Activated naive CD4-positive, alpha-beta T cell treated with anti-CD3 and anti-CD28 coated beads for 36 hours (primary cell): ENCODE measurements at regions of chr2 and their contacts with region 1.

Region 1: DNA sequence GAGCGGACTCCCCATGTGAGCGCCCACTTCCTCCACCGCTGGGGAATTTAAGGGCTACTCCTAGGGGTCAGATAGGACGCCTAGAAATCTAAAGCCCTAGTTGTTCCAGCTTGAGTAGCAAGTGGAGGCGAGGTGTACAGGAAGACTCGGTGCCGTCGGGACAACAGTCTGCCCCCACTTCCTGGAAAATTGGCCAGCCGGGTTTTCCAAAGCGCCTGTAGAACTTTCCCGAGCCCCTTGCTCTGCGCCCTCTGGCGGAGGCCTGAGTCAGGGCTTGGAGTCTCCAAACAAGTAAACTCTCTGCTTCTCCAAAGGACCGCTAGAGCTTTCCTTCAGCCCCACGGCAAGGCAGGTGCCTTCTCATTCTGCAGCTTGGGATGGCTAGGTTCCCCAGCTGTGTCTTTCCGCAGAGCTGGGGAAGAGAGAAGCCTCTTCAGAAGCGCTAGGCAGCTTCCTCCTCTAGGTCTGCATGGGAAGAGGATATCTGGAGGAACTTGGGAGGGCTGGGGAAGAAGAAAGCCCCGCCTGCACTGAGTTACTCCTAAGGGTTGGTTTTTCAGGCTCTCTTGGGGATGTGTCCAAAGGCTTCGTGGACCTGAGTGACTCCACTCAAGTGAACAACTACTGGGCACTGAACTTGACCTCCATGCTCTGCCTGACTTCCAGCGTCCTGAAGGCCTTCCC is 688 bp downstream of the SPR start:
- DNase-seq: peak; percentile 76
- H3K4me3 Mint-ChIP-seq: peak overlapping the region; percentile 76
- H3K27ac Mint-ChIP-seq: no peak overlapping the region
- H3K4me1 Mint-ChIP-seq: peaks cover 6% of the 10 kb centered on the region
- H3K27me3 Mint-ChIP-seq: peaks cover 63% of the 10 kb centered on the region

Region 2: GRCh38 chr2:72770879-72771461 is 116.9 kb before region 1 on chr2:
- CTCF ChIA-PET with region 1: interaction called, 13 read pairs
- intact Hi-C with region 1: loop called (anchors 1 kb)
- DNase-seq: peak; percentile 78
- H3K4me3 Mint-ChIP-seq: no peak overlapping the region
- H3K27ac Mint-ChIP-seq: no peak overlapping the region
- H3K4me1 Mint-ChIP-seq: no peaks in the 10 kb centered on the region
- H3K27me3 Mint-ChIP-seq: no peaks in the 10 kb centered on the region

Region 3: DNA sequence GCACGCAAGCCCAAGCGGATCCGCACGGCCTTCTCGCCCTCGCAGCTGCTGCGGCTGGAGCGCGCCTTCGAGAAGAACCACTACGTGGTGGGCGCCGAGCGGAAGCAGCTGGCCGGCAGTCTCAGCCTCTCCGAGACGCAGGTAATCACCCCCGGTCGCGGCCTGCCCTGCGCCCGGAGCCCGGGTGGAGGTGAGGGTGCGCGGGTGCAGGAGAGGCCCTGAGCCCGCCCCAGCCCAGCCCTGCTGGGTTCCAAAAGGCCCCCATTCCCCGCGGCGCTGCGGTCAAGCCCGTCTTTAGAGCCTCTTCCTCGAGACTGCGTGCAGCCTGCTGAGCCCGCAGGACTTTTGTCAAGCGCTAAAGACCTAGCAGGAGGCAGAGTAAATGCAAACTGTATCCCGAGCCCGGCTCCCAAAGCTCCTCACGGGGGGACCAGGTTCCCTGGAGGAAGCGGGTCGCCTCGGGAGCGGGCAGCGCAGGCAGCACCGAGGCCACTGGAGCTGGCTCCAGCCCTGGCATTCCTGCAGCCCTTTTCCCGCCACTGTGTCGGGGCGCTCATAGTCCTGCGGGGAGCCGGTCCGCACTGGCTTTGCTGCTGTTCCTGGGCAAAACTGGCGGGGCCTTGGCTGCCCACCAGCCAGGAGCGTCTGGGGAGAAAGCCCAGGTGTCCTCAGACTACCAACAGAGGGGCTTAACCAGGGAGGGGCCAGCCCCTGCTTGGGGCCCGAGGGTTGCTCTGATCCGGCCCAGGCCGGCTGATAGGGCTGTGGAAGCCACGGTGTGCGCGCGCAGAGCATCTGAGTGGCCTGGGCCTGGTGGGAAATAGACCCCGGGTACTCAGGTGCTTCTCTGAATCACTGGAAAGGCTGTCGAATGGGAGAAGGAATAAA is 36.7 kb after region 1 on chr2:
- CTCF ChIA-PET with region 1: interaction called, 26 read pairs
- intact Hi-C with region 1: no loop called
- DNase-seq: no peak
- H3K4me3 Mint-ChIP-seq: no peak overlapping the region
- H3K27ac Mint-ChIP-seq: no peak overlapping the region
- H3K4me1 Mint-ChIP-seq: peaks cover 10% of the 10 kb centered on the region
- H3K27me3 Mint-ChIP-seq: peaks cover 47% of the 10 kb centered on the region

Region 4: GRCh38 chr2:72973566-72974435 is 85.9 kb after region 1 on chr2:
- CTCF ChIA-PET with region 1: interaction called, 72 read pairs
- intact Hi-C with region 1: loop called (anchors 1 kb)
- DNase-seq: peak; percentile 53
- H3K4me3 Mint-ChIP-seq: no peak overlapping the region
- H3K27ac Mint-ChIP-seq: no peak overlapping the region
- H3K4me1 Mint-ChIP-seq: no peaks in the 10 kb centered on the region
- H3K27me3 Mint-ChIP-seq: no peaks in the 10 kb centered on the region

Region 5: GRCh38 chr2:73085691-73086360 is 197.9 kb after region 1 on chr2:
- CTCF ChIA-PET with region 1: interaction called, 4 read pairs
- intact Hi-C with region 1: loop called (anchors 2 kb)
- DNase-seq: peak; percentile 90
- H3K4me3 Mint-ChIP-seq: no peak overlapping the region
- H3K27ac Mint-ChIP-seq: no peak overlapping the region
- H3K4me1 Mint-ChIP-seq: no peaks in the 10 kb centered on the region
- H3K27me3 Mint-ChIP-seq: no peaks in the 10 kb centered on the region

Region 6: GRCh38 chr2:73163483-73164367 is 275.8 kb after region 1 on chr2:
- CTCF ChIA-PET with region 1: no interaction called
- intact Hi-C with region 1: loop called (anchors 1 kb)
- DNase-seq: peak; percentile 82
- H3K4me3 Mint-ChIP-seq: no peak overlapping the region
- H3K27ac Mint-ChIP-seq: no peak overlapping the region
- H3K4me1 Mint-ChIP-seq: no peaks in the 10 kb centered on the region
- H3K27me3 Mint-ChIP-seq: peaks cover 2% of the 10 kb centered on the region

Region 7: DNA sequence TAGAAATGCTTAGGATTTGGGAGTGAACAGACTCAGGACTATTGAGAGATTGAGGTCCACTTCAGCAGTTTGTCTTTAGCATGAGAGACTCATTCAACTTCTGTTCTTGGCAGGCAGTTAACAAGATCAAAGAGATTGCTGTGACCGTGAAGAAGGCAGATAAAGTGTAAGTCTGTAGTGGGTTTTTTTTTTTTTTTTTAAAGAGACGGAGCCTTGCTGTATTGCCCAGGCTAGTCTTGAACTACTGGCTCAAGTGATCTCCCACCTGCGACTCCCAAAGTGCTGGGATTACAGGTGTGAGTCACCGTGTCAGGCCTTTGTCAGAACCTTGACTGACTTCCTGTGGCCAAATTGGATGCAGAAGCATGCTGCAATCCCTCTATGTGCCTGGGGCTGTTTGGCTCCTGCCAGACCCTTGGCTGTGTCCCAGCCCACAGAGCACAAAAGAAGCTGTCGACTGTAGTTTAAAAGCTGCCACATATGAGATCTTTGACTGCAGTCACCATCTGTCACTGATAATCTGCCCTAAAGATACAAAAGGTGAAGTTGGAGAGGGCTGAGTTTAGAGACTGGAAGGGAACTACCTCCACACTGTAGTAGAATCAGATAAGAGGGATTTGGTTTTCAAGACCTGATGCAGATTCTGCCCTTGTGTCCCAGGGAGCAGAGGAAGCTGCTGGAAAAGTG is 356.1 kb after region 1 on chr2:
- CTCF ChIA-PET with region 1: no interaction called
- intact Hi-C with region 1: no loop called
- DNase-seq: no peak
- H3K4me3 Mint-ChIP-seq: no peak overlapping the region
- H3K27ac Mint-ChIP-seq: peak overlapping the region; percentile 71
- H3K4me1 Mint-ChIP-seq: peaks cover 31% of the 10 kb centered on the region
- H3K27me3 Mint-ChIP-seq: no peaks in the 10 kb centered on the region

Region 8: DNA sequence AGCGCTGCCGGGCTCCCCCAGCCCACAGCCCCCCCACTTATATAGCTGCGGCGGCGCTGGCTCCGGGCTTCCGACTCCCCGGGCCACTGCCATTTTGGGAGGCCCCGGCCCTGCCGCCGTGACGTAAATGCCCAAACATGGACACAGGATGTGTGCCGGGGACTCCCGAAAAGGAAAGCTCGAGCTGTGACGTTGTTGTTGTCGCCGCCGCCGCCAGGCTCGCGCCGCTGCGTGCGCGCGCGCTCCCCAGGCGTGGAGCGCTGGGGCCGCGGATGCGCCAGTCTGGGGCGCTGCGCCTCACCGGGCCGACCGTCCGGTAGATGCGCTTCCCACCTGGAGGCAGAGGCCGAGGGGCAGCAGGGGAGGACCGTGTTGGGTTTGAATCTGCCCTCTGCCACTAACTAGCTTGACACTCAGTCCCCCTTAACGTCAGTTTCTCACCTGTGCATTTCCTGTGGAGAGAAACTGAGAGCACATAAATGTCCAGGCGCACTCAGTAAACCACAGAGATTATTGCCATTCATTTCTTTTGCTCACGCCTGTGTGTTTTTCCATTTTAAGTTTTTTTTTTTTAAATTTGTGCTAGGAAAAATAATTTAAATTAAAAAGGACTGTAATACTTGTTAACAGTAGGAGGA is 405.8 kb after region 1 on chr2 and contains the start of gene EGR4:
- CTCF ChIA-PET with region 1: no interaction called
- intact Hi-C with region 1: loop called (anchors 5 kb)
- DNase-seq: peak; percentile 94
- H3K4me3 Mint-ChIP-seq: peak within 1 kb of the TSS; percentile 73
- H3K27ac Mint-ChIP-seq: no peak within 1 kb of the TSS
- H3K4me1 Mint-ChIP-seq: peaks cover 14% of the 10 kb centered on the region
- H3K27me3 Mint-ChIP-seq: peaks cover 65% of the 10 kb centered on the region
- total RNA-seq, gene EGR4: 0.07 to 0.12 TPM